CD8-positive, alpha-beta T cell (primary cell): ENCODE measurements at regions of chr3 and their contacts with region 1.

Region 1: DNA sequence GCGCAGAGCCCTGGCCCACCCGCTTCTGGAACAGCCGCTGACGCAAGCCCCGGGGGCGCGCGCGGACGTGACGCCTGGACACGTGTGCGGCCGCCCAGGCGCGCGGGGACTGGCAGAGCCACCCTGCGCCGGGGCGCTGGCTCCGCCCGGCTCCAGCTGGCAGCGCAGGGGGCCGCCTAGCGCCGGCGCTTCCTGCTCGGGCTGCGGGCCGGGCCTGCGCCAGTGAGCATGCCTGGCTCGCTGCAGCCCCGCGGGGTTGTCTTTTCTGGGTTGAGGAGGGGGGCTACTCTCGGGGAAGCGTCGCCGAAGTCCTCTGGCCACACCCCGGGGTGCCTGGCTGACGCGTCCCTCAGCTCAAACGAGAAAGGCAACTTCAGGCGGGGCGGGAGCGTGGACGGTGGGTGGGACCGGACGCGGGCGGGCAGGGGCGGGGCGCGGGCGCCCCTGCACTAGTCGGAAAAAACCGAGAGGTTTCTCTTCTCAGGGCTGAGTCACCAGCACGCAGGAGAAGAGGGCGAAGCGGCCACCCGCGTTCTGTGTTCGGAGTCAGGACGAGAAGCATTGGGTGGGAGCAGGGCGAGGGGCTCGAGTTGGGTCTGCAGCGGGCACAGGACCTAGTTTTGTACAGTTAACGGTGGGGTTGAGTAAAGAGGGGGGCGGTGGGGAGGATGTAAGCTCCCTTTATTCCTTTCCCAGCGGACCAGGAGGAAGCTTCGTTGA is at the start of gene SIAH2:
- DNase-seq: peak; percentile 85 to 98 (median 92)
- ATAC-seq: peak; percentile 81
- H3K4me3 ChIP-seq: peak within 1 kb of the TSS; percentile 81 to 87
- H3K4me3 Mint-ChIP-seq: peak within 1 kb of the TSS; percentile 94
- H3K27ac ChIP-seq: peak within 1 kb of the TSS; percentile 97 to 98
- H3K27ac Mint-ChIP-seq: peak within 1 kb of the TSS; percentile 99
- H3K4me1 ChIP-seq: peaks cover 39% of the 10 kb centered on the region
- H3K4me1 Mint-ChIP-seq: peaks cover 43% of the 10 kb centered on the region
- H3K27me3 ChIP-seq: no peaks in the 10 kb centered on the region
- H3K27me3 Mint-ChIP-seq: no peaks in the 10 kb centered on the region
- CTCF ChIP-seq: no peak
- total RNA-seq, gene SIAH2: 57.0 to 65.4 TPM

Region 2: DNA sequence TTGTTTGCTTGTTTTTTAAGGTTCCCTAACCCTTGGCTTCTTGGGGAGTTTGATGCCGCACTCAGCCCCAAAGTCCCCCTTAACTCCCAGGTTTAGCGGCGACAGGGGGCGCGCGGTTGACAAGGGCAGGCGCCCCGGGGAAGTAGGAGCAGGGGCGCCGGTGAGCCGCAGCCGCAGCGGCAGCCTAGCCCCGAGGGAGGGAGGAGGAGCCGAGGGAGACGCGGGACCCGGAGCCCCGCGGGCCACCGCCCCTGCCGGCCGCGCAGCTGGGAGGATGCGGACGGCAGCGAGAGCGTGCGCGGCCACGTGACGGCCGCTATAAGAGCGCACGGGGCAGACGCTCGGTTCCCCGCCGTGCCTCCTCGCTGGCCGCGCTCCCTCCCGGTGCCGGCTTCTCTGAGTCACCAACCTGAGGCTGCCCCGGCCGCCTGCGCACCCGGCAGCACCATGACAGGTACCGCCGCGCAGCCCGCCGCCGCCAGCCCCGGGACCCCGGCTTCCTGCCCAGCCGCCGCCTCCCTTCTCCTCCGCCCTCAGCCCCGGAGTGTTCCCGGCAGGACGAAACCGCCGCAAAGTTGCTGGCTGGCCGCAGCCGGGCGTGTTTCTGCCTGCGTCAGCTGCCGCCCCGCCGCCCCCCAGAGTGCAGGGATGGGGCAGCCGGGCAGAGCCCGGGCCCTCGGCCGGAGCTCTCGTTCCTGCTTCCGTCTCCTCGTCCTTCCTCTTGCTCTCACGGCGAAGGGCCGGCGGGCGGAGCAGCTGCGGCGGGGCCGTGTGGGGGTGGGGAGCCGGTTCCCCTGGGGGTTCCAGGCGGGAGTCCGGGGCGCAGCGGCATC is 1771.9 kb before region 1 on chr3 and contains the start of gene GYG1:
- CTCF ChIA-PET with region 1: no interaction called
- POLR2A ChIA-PET with region 1: no interaction called
- intact Hi-C with region 1: loop called in 1 of 2 experiments (anchors 10 kb)
- DNase-seq: peak; percentile 59 to 94 (median 79)
- ATAC-seq: peak; percentile 81
- H3K4me3 ChIP-seq: peak within 1 kb of the TSS; percentile 46 to 66
- H3K4me3 Mint-ChIP-seq: peak within 1 kb of the TSS; percentile 80
- H3K27ac ChIP-seq: peak within 1 kb of the TSS; percentile 69 to 79
- H3K27ac Mint-ChIP-seq: peak within 1 kb of the TSS; percentile 84
- H3K4me1 ChIP-seq: peaks cover 18% of the 10 kb centered on the region
- H3K4me1 Mint-ChIP-seq: peaks cover 35% of the 10 kb centered on the region
- H3K27me3 ChIP-seq: no peaks in the 10 kb centered on the region
- H3K27me3 Mint-ChIP-seq: no peaks in the 10 kb centered on the region
- CTCF ChIP-seq: peak; percentile 45
- total RNA-seq, gene GYG1: 29.4 to 35.2 TPM

Region 3: GRCh38 chr3:150546226-150547044 is 216.8 kb before region 1 on chr3 and contains the starts of genes EIF2A and SERP1:
- CTCF ChIA-PET with region 1: interaction called, 4 read pairs
- POLR2A ChIA-PET with region 1: interaction called, 40 read pairs
- intact Hi-C with region 1: loop called (anchors 1 kb)
- DNase-seq: peak; percentile 99 to 100 (median 99)
- ATAC-seq: peak; percentile 88
- H3K4me3 ChIP-seq: peak within 1 kb of the TSS; percentile 61 to 84
- H3K4me3 Mint-ChIP-seq: peak within 1 kb of the TSS; percentile 97
- H3K27ac ChIP-seq: peak within 1 kb of the TSS; percentile 91 to 98
- H3K27ac Mint-ChIP-seq: peak within 1 kb of the TSS; percentile 99
- H3K4me1 ChIP-seq: peaks cover 36% of the 10 kb centered on the region
- H3K4me1 Mint-ChIP-seq: peaks cover 74% of the 10 kb centered on the region
- H3K27me3 ChIP-seq: no peaks in the 10 kb centered on the region
- H3K27me3 Mint-ChIP-seq: no peaks in the 10 kb centered on the region
- CTCF ChIP-seq: no peak
- total RNA-seq, gene EIF2A: 156 to 162 TPM
- total RNA-seq, gene SERP1: 143 to 151 TPM

Region 4: GRCh38 chr3:150635526-150635925 is 127.8 kb before region 1 on chr3:
- CTCF ChIA-PET with region 1: no interaction called
- POLR2A ChIA-PET with region 1: interaction called, 3 read pairs
- intact Hi-C with region 1: loop called in 1 of 2 experiments (anchors 10 kb)
- DNase-seq: peak in 2 of 9 experiments; percentile 59 to 71
- ATAC-seq: peak; percentile 64
- H3K4me3 ChIP-seq: no peak overlapping the region
- H3K4me3 Mint-ChIP-seq: peak overlapping the region; percentile 26
- H3K27ac ChIP-seq: peak overlapping the region in 1 of 2 experiments; percentile 66
- H3K27ac Mint-ChIP-seq: peak overlapping the region; percentile 62
- H3K4me1 ChIP-seq: peaks cover 15% of the 10 kb centered on the region
- H3K4me1 Mint-ChIP-seq: peaks cover 26% of the 10 kb centered on the region
- H3K27me3 ChIP-seq: no peaks in the 10 kb centered on the region
- H3K27me3 Mint-ChIP-seq: no peaks in the 10 kb centered on the region
- CTCF ChIP-seq: no peak

Region 5: GRCh38 chr3:150721285-150722130 is 41.8 kb before region 1 on chr3:
- CTCF ChIA-PET with region 1: interaction called, 19 read pairs
- POLR2A ChIA-PET with region 1: interaction called, 6 read pairs
- intact Hi-C with region 1: loop called (anchors 2 to 5 kb)
- DNase-seq: peak in 2 of 9 experiments; percentile 73 to 80
- ATAC-seq: peak; percentile 91
- H3K4me3 ChIP-seq: no peak overlapping the region
- H3K4me3 Mint-ChIP-seq: no peak overlapping the region
- H3K27ac ChIP-seq: no peak overlapping the region
- H3K27ac Mint-ChIP-seq: no peak overlapping the region
- H3K4me1 ChIP-seq: no peaks in the 10 kb centered on the region
- H3K4me1 Mint-ChIP-seq: peaks cover 8% of the 10 kb centered on the region
- H3K27me3 ChIP-seq: no peaks in the 10 kb centered on the region
- H3K27me3 Mint-ChIP-seq: no peaks in the 10 kb centered on the region
- CTCF ChIP-seq: peak; percentile 90

Region 6: GRCh38 chr3:150787741-150788370 is 24.6 kb after region 1 on chr3:
- CTCF ChIA-PET with region 1: interaction called, 19 read pairs
- POLR2A ChIA-PET with region 1: interaction called, 12 read pairs
- intact Hi-C with region 1: loop called in 1 of 2 experiments (anchors 2 kb)
- DNase-seq: peak; percentile 52 to 83 (median 80)
- ATAC-seq: peak; percentile 86
- H3K4me3 ChIP-seq: no peak overlapping the region
- H3K4me3 Mint-ChIP-seq: no peak overlapping the region
- H3K27ac ChIP-seq: no peak overlapping the region
- H3K27ac Mint-ChIP-seq: no peak overlapping the region
- H3K4me1 ChIP-seq: no peaks in the 10 kb centered on the region
- H3K4me1 Mint-ChIP-seq: peaks cover 3% of the 10 kb centered on the region
- H3K27me3 ChIP-seq: no peaks in the 10 kb centered on the region
- H3K27me3 Mint-ChIP-seq: peaks cover 3% of the 10 kb centered on the region
- CTCF ChIP-seq: peak; percentile 98

Region 7: GRCh38 chr3:151086484-151087456 is 323.5 kb after region 1 on chr3:
- CTCF ChIA-PET with region 1: no interaction called
- POLR2A ChIA-PET with region 1: no interaction called
- intact Hi-C with region 1: loop called (anchors 10 kb)
- DNase-seq: peak; percentile 35 to 80 (median 67)
- ATAC-seq: peak; percentile 90
- H3K4me3 ChIP-seq: peak overlapping the region; percentile 39 to 73
- H3K4me3 Mint-ChIP-seq: peak overlapping the region; percentile 90
- H3K27ac ChIP-seq: no peak overlapping the region
- H3K27ac Mint-ChIP-seq: no peak overlapping the region
- H3K4me1 ChIP-seq: peaks cover 9% of the 10 kb centered on the region
- H3K4me1 Mint-ChIP-seq: peaks cover 15% of the 10 kb centered on the region
- H3K27me3 ChIP-seq: peaks cover 0 to 6% of the 10 kb centered on the region in 2 experiments
- H3K27me3 Mint-ChIP-seq: peaks cover 39% of the 10 kb centered on the region
- CTCF ChIP-seq: no peak